Activated CD4-positive, alpha-beta memory T cell treated with anti-CD3 and anti-CD28 coated beads for 36 hours (primary cell): ENCODE measurements at regions of chr6 and their contacts with region 1.

Region 1: GRCh38 chr6:130602151-130602770 is 224.9 kb upstream of the SMLR1 start:
- DNase-seq: peak; percentile 49
- H3K4me3 Mint-ChIP-seq: no peak overlapping the region
- H3K27ac Mint-ChIP-seq: no peak overlapping the region
- H3K4me1 Mint-ChIP-seq: peaks cover 23% of the 10 kb centered on the region
- H3K27me3 Mint-ChIP-seq: no peaks in the 10 kb centered on the region

Region 2: DNA sequence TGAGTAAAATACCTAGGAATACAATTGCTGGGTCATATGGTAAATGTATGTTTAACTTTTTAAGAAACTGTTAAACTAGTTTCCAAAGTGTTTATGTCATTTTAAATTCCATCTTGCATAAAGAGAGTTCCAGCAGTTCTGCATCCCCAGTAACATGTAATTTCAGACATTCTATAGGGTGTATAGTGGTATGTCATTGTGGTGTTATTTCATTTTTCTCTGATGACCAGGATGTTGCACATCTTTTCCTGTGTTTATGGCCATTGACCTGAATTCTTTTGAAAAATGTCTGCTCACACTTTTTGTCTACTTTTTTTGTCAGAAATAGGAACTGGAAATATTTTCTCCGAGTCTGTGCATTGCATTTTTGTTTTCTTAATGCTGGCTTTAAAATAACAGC is 107.5 kb before region 1 on chr6:
- CTCF ChIA-PET with region 1: no interaction called
- POLR2A ChIA-PET with region 1: no interaction called
- intact Hi-C with region 1: no loop called
- DNase-seq: no peak
- H3K4me3 Mint-ChIP-seq: no peak overlapping the region
- H3K27ac Mint-ChIP-seq: no peak overlapping the region
- H3K4me1 Mint-ChIP-seq: no peaks in the 10 kb centered on the region
- H3K27me3 Mint-ChIP-seq: no peaks in the 10 kb centered on the region

Region 3: GRCh38 chr6:130560231-130560630 is 42.0 kb before region 1 on chr6:
- CTCF ChIA-PET with region 1: no interaction called
- POLR2A ChIA-PET with region 1: no interaction called
- intact Hi-C with region 1: loop called (anchors 1 kb)
- DNase-seq: no peak
- H3K4me3 Mint-ChIP-seq: no peak overlapping the region
- H3K27ac Mint-ChIP-seq: no peak overlapping the region
- H3K4me1 Mint-ChIP-seq: peaks cover 14% of the 10 kb centered on the region
- H3K27me3 Mint-ChIP-seq: no peaks in the 10 kb centered on the region

Region 4: GRCh38 chr6:130575971-130576370 is 26.3 kb before region 1 on chr6:
- CTCF ChIA-PET with region 1: no interaction called
- POLR2A ChIA-PET with region 1: no interaction called
- intact Hi-C with region 1: loop called (anchors 1 kb)
- DNase-seq: peak; percentile 77
- H3K4me3 Mint-ChIP-seq: peak overlapping the region; percentile 23
- H3K27ac Mint-ChIP-seq: peak overlapping the region; percentile 45
- H3K4me1 Mint-ChIP-seq: peaks cover 40% of the 10 kb centered on the region
- H3K27me3 Mint-ChIP-seq: no peaks in the 10 kb centered on the region

Region 5: DNA sequence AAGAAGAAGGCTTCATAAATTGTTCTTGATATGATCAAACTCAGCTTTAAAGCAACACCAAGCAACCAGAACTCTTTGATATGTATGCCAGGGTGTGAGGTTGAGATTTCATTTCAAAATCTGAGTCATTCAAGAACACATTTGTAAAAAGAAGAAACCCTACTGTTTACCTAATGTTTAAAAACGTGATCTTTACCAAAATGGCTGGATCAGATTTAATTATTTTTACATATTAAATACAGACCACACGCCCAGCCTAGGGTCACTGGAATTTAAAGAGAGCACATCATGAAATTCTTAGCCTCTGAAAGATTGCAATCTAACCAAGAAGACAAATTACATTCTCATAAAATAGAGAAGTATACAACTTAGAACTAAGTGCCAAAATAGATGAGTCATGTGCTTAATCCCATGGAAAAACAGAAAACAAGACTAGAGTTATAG is 18.1 kb after region 1 on chr6:
- CTCF ChIA-PET with region 1: no interaction called
- POLR2A ChIA-PET with region 1: no interaction called
- intact Hi-C with region 1: loop called (anchors 1 kb)
- DNase-seq: no peak
- H3K4me3 Mint-ChIP-seq: no peak overlapping the region
- H3K27ac Mint-ChIP-seq: no peak overlapping the region
- H3K4me1 Mint-ChIP-seq: peaks cover 14% of the 10 kb centered on the region
- H3K27me3 Mint-ChIP-seq: peaks cover 2% of the 10 kb centered on the region

Region 6: GRCh38 chr6:130625825-130626527 is 23.7 kb after region 1 on chr6:
- CTCF ChIA-PET with region 1: no interaction called
- POLR2A ChIA-PET with region 1: no interaction called
- intact Hi-C with region 1: loop called (anchors 1 kb)
- DNase-seq: peak; percentile 31
- H3K4me3 Mint-ChIP-seq: no peak overlapping the region
- H3K27ac Mint-ChIP-seq: no peak overlapping the region
- H3K4me1 Mint-ChIP-seq: peaks cover 22% of the 10 kb centered on the region
- H3K27me3 Mint-ChIP-seq: peaks cover 2% of the 10 kb centered on the region

Region 7: DNA sequence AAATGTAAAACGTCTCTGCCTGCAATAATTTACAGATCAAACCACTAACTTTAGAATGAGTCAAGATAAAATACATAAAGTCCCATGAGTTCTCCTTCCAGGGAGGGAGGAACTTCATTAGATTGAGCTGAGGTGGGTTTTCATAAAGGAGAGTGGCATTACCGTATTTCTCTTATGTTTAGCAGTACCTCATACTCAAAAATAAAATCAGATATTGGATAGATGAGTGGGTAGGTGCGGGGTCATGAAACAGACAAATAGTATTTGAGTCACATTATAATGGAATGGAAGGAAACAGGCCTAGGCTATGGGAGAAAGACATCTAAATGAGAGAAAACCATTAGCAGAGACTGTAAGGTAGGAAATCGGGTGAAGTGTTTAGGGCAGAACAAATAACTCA is 58.8 kb after region 1 on chr6:
- CTCF ChIA-PET with region 1: no interaction called
- POLR2A ChIA-PET with region 1: no interaction called
- intact Hi-C with region 1: no loop called
- DNase-seq: no peak
- H3K4me3 Mint-ChIP-seq: no peak overlapping the region
- H3K27ac Mint-ChIP-seq: no peak overlapping the region
- H3K4me1 Mint-ChIP-seq: no peaks in the 10 kb centered on the region
- H3K27me3 Mint-ChIP-seq: no peaks in the 10 kb centered on the region

Region 8: DNA sequence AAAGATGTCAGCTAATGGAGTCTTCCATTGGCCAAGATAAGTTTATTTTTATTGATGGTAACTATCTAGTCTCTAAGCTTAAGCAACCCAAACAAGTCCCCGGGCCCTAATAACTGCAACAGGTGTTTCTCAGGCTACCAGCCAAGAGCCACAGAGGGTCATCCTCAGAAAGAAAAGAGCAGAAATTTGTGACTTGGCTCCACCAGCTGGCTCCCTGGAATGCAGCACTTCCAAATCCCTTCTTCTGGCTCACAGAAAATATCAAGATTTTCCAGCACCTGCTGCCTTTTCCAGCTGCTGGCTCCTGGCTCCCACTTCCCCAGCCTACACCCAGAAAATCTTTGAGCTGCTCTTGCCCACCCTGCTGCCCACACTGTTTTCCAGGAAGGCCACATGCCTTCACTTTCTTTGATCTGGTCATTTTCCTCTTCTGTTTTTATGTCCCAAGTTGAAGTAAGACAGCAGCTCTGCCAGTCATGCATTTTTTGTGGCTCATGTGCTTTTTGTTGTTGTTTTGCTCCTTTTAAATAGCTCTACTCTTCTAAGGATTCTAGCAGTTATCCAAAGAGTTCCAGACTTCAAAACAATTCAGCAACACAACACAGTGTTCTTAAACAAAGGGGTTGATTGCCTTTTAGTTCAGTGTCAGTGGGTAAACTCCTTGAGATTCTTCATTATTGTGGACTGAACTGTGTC is 74.0 kb after region 1 on chr6:
- CTCF ChIA-PET with region 1: no interaction called
- POLR2A ChIA-PET with region 1: no interaction called
- intact Hi-C with region 1: loop called (anchors 5 kb)
- DNase-seq: no peak
- H3K4me3 Mint-ChIP-seq: no peak overlapping the region
- H3K27ac Mint-ChIP-seq: no peak overlapping the region
- H3K4me1 Mint-ChIP-seq: peaks cover 14% of the 10 kb centered on the region
- H3K27me3 Mint-ChIP-seq: no peaks in the 10 kb centered on the region

Region 9: GRCh38 chr6:130810307-130811030 is 208.2 kb after region 1 on chr6:
- CTCF ChIA-PET with region 1: no interaction called
- POLR2A ChIA-PET with region 1: no interaction called
- intact Hi-C with region 1: no loop called
- DNase-seq: no peak
- H3K4me3 Mint-ChIP-seq: no peak overlapping the region
- H3K27ac Mint-ChIP-seq: no peak overlapping the region
- H3K4me1 Mint-ChIP-seq: no peaks in the 10 kb centered on the region
- H3K27me3 Mint-ChIP-seq: peaks cover 2% of the 10 kb centered on the region